Activated CD4-positive, alpha-beta memory T cell treated with anti-CD3 and anti-CD28 coated beads for 36 hours (primary cell): ENCODE measurements at regions of chr7 and their contacts with region 1.

Region 1: DNA sequence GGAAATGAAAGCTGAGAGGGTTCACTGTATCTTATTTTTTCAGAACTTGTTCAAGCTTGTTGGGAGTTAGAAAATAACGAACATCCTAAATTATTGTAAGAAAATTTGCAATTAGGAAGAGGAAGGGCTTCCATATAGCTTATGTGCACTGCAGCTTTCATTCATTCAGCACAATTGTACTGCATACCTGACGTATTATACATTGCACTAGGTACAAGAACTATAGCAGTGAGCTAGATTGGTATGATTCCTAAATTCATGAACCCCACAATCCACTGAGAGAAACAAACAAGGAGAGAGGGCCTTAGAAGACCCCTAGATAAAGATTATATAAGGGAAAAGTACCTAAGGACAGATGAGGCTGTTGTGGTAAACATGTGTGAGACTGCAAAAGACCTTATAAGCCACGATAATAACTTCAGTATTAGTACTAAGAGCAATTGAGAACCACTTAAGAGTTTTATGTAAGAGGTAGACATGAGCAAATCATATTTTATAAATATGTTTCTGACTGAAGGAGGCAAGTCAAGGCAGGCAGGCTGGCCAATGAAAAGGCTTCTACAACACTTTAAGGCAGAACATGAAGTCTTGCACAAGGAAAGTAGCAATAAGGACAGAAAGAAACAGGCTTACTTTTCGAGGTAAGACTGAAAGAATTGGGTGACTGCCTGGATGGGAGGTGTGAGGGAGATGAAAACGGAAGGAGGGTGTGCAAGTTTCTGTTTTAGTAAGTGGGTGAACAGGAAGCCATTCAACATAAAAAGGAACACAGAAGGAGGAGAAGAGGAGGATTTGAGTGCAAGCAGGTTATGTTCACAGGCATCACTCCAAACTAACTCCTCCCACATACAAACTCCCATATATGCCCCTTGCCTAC is 77.9 kb upstream of the LRRN3 start:
- DNase-seq: peak; percentile 59
- H3K4me3 Mint-ChIP-seq: peak overlapping the region; percentile 59
- H3K27ac Mint-ChIP-seq: peak overlapping the region; percentile 84
- H3K4me1 Mint-ChIP-seq: peaks cover 60% of the 10 kb centered on the region
- H3K27me3 Mint-ChIP-seq: no peaks in the 10 kb centered on the region

Region 2: DNA sequence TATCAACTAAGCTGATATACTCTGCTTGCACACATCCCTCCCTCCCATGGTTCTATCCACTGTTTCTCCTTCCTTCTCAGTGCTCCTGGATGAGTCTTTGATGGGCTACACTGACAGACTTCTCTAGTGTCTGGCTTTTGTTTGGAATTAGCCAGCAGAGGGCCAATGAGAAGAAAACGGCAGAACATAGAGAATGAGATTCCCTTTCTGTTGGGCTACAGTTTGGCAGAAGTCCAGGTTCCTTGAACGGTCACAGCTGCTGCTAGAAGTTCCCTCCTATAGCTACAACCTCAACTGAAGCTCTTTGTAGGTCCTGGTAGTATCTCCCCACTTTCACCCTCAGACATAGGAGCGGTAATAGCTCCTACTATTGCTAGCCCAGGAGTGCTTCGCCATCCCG is 173.2 kb before region 1 on chr7:
- CTCF ChIA-PET with region 1: no interaction called
- POLR2A ChIA-PET with region 1: no interaction called
- intact Hi-C with region 1: no loop called
- DNase-seq: no peak
- H3K4me3 Mint-ChIP-seq: no peak overlapping the region
- H3K27ac Mint-ChIP-seq: no peak overlapping the region
- H3K4me1 Mint-ChIP-seq: peaks cover 9% of the 10 kb centered on the region
- H3K27me3 Mint-ChIP-seq: no peaks in the 10 kb centered on the region

Region 3: GRCh38 chr7:110977127-110977737 is 35.8 kb before region 1 on chr7:
- CTCF ChIA-PET with region 1: interaction called, 3 read pairs
- POLR2A ChIA-PET with region 1: no interaction called
- intact Hi-C with region 1: loop called (anchors 2 kb)
- DNase-seq: no peak
- H3K4me3 Mint-ChIP-seq: peak overlapping the region; percentile 28
- H3K27ac Mint-ChIP-seq: peak overlapping the region; percentile 59
- H3K4me1 Mint-ChIP-seq: peaks cover 24% of the 10 kb centered on the region
- H3K27me3 Mint-ChIP-seq: no peaks in the 10 kb centered on the region